Gastrocnemius medialis (tissue), 4 donors: ENCODE measurements at regions of chr7 and their contacts with region 1.

Region 1: GRCh38 chr7:128883622-128884501 is 21.2 kb downstream of the ATP6V1F start:
- DNase-seq: peak in 1 of 2 donors; percentile 72
- ATAC-seq: peak; percentile 35 to 39
- H3K4me3 ChIP-seq: peak overlapping the region in 1 of 4 donors; percentile 8
- H3K27ac ChIP-seq: no peak overlapping the region
- H3K4me1 ChIP-seq: peaks cover 0 to 5% of the 10 kb centered on the region in 2 donors
- H3K27me3 ChIP-seq: no peaks in the 10 kb centered on the region
- CTCF ChIP-seq: peak; percentile 86 to 97 (median 93)
- POLR2A ChIP-seq: no peak

Region 2: GRCh38 chr7:128455551-128456254 is 428.2 kb before region 1 on chr7 and contains the start of gene HILPDA:
- in situ Hi-C with region 1: loop called in 2 of 4 experiments (anchors 25 kb)
- intact Hi-C with region 1: no loop called
- DNase-seq: peak; percentile 83 to 92
- ATAC-seq: peak; percentile 84 to 92
- H3K4me3 ChIP-seq: peak within 1 kb of the TSS; percentile 71 to 89 (median 84)
- H3K27ac ChIP-seq: peak within 1 kb of the TSS; percentile 83 to 92 (median 88)
- H3K4me1 ChIP-seq: peaks cover 20 to 22% of the 10 kb centered on the region in 2 donors
- H3K27me3 ChIP-seq: no peaks in the 10 kb centered on the region
- CTCF ChIP-seq: no peak
- POLR2A ChIP-seq: peak; percentile 66 to 80
- total RNA-seq, gene HILPDA: 1.1 to 4.3 (median 3.2) TPM

Region 3: GRCh38 chr7:128530855-128531104 is 353.1 kb before region 1 on chr7:
- in situ Hi-C with region 1: no loop called
- intact Hi-C with region 1: loop called (anchors 10 kb)
- DNase-seq: no peak
- ATAC-seq: no peak
- H3K4me3 ChIP-seq: peak overlapping the region; percentile 85 to 98 (median 86)
- H3K27ac ChIP-seq: peak overlapping the region; percentile 97 to 100 (median 98)
- H3K4me1 ChIP-seq: peaks cover 22 to 35% of the 10 kb centered on the region in 2 donors
- H3K27me3 ChIP-seq: no peaks in the 10 kb centered on the region
- CTCF ChIP-seq: no peak
- POLR2A ChIP-seq: no peak

Region 4: GRCh38 chr7:128739048-128739962 is 144.6 kb before region 1 on chr7 and contains the start of gene CALU:
- in situ Hi-C with region 1: no loop called
- intact Hi-C with region 1: loop called (anchors 5 kb)
- DNase-seq: peak; percentile 97 to 98
- ATAC-seq: peak; percentile 96 to 97
- H3K4me3 ChIP-seq: peak within 1 kb of the TSS; percentile 82 to 100 (median 91)
- H3K27ac ChIP-seq: peak within 1 kb of the TSS; percentile 92 to 99 (median 95)
- H3K4me1 ChIP-seq: peaks cover 35 to 40% of the 10 kb centered on the region in 2 donors
- H3K27me3 ChIP-seq: no peaks in the 10 kb centered on the region
- CTCF ChIP-seq: no peak
- POLR2A ChIP-seq: peak; percentile 95 to 97
- total RNA-seq, gene CALU: 40.1 to 115 (median 90.6) TPM

Region 5: DNA sequence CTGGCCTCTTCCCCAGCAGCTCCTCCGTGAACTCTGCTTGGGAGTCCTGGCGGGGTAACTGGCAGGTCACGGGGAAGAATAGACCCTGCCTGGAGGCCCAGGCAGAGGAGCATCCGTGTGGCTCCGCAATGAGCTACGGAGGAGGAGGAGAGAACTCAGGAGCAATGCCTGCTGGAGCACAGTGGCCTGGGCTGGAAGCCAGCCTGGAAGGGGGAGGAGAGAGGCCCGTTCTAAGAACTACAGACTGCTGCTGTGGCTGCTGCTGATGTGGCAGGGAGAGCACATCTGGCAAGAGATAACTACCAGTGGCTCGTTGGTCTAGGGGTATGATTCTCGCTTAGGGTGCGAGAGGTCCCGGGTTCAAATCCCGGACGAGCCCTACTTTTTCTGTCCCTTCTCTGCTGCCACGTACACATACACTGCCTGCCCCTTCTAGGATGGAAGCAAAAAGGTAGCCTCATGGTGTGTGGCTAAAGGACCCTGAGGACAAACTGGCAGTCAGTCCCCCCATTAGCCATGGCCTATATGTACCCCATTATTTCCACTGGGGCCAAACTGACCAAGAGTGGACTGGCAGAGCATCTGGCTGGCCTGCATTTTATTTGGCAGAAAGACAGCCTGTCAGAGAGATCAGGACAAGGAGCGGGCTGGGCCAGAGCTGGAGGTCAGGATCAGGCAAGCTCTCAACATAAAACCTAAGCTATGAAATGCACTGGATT is 100.6 kb before region 1 on chr7:
- in situ Hi-C with region 1: loop called in 2 of 4 experiments (anchors 10 to 25 kb)
- intact Hi-C with region 1: no loop called
- DNase-seq: peak in 1 of 2 donors; percentile 50
- ATAC-seq: peak in 1 of 2 donors; percentile 70
- H3K4me3 ChIP-seq: no peak overlapping the region
- H3K27ac ChIP-seq: no peak overlapping the region
- H3K4me1 ChIP-seq: no peaks in the 10 kb centered on the region
- H3K27me3 ChIP-seq: no peaks in the 10 kb centered on the region
- CTCF ChIP-seq: no peak
- POLR2A ChIP-seq: no peak

Region 6: GRCh38 chr7:128791121-128791961 is 92.5 kb before region 1 on chr7:
- in situ Hi-C with region 1: loop called (anchors 10 to 25 kb)
- intact Hi-C with region 1: loop called (anchors 1 kb)
- DNase-seq: peak; percentile 38 to 58
- ATAC-seq: peak; percentile 43 to 66
- H3K4me3 ChIP-seq: peak overlapping the region; percentile 69 to 82 (median 74)
- H3K27ac ChIP-seq: peak overlapping the region; percentile 48 to 72 (median 56)
- H3K4me1 ChIP-seq: peaks cover 21 to 30% of the 10 kb centered on the region in 2 donors
- H3K27me3 ChIP-seq: no peaks in the 10 kb centered on the region
- CTCF ChIP-seq: no peak
- POLR2A ChIP-seq: peak; percentile 47 to 57